ENCODE measurements at regions of chr1 and their contacts with region 1.

Region 1: GRCh38 chr1:26787706-26788514 is at the start of gene PIGV:
- DNase-seq: peak; percentile 93
- CTCF ChIP-seq: no peak

Region 2: GRCh38 chr1:26529655-26530409 is 258.1 kb before region 1 on chr1 and contains the start of gene RPS6KA1:
- CTCF ChIA-PET with region 1: no interaction called
- POLR2A ChIA-PET with region 1: no interaction called
- DNase-seq: peak; percentile 91
- CTCF ChIP-seq: no peak

Region 3: DNA sequence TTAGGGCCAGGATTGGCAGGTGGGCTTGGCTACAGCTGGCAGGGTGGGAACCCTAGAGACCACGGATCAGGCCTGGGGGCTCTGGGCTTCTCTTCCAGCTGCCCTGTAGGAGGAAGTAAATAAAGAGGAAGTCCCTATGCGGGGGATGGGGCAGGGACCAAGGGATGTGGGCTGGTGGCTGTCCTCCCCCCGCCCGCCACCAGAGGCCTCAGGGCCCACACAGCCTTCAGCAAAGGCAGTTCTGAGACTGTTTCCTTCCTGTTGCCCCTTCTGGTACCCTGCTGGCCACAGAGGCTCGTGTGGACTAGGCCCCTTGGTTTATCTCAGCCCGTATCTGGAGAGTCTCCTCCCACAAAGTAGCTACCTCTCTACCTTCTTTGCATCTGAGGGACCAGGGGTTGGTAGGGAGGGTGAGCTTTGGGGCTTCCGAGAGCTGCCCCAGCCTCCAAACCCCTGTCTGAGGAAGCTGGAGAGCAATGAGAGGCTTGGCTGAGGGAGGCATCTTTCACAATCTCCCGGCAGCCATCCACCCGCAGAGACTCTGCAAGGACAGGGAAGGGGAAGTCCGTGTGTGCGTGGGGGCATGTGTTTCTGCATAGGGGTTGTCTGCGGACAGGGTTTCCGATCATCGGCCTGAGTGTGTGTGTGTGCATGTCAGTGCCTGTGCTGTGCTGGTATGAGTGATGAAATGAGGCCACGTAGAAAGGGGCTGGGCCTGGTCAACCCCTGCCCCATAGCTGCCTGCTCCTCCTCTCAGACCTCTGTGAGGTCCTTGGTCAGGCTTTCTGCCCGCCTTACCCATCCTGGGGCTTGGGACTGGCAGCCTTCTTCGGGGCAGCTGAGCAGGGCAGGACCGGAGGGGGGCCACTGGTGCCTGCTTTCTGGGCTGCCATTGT is 245.8 kb before region 1 on chr1:
- CTCF ChIA-PET with region 1: interaction called, 48 read pairs
- POLR2A ChIA-PET with region 1: no interaction called
- DNase-seq: peak; percentile 91
- CTCF ChIP-seq: peak; percentile 40

Region 4: GRCh38 chr1:26614655-26615411 is 173.1 kb before region 1 on chr1:
- CTCF ChIA-PET with region 1: interaction called, 12 read pairs
- POLR2A ChIA-PET with region 1: no interaction called
- DNase-seq: no peak
- CTCF ChIP-seq: no peak

Region 5: DNA sequence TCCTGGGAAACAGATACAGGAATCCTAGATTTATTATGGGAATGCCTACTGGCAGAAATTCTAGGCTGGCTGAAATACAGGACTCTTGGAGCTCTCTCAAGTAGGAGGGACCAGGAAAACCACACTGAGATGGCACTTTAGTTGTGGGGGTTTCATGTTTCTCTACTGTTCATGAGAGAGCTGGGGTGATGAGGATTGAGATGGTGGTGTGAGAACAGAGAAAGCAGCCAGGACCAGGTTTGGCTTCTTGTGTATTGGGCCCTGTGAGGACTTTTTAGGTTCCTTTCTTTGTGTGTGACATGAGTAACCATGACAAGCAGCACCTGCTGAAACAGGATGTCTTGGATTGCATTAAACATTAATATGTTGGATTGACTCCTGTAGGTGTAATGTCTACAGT is 87.2 kb before region 1 on chr1:
- CTCF ChIA-PET with region 1: interaction called, 35 read pairs
- POLR2A ChIA-PET with region 1: no interaction called
- DNase-seq: no peak
- CTCF ChIP-seq: no peak

Region 6: DNA sequence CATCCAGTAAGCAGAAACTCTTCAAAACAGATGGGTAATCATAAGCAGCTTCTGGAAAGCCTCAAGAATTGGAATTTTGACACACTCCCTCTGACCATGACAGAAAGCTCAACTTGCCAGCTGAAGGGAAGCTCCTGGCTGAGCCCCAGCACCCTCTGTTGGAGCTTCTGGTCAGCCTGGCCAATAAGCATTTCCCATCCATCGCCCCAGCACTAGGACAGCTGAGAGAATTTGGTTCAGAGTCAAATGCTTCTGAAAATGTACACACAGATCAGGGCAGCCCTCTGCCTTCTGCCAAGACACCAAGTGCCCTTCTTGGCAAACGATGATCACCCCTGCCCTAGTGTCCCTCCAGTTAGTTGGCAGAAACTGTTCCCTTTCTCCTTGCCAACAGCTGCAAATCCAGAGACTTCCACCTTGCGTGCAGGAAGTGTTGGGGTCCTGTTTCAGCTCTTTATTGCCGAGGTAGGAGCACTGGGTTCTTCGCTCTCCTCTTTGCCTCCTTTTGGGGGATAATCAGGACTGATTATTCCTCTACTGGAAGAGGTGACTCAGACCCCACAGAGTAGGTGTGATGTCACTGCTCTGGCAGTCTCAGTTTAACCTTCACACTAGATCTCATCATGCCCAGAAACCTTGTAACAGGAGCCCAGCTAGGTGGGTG is 11.7 kb after region 1 on chr1:
- CTCF ChIA-PET with region 1: interaction called, 72 read pairs
- POLR2A ChIA-PET with region 1: no interaction called
- DNase-seq: no peak
- CTCF ChIP-seq: no peak

Region 7: GRCh38 chr1:26833432-26834405 is 45.8 kb after region 1 on chr1:
- CTCF ChIA-PET with region 1: interaction called, 12 read pairs
- POLR2A ChIA-PET with region 1: no interaction called
- DNase-seq: peak; percentile 91
- CTCF ChIP-seq: peak; percentile 47

Measured in GM10248 (cell line).